ENCODE measurements at regions of chr1 and their contacts with region 1.

Region 1: GRCh38 chr1:37667023-37667761 is 25.1 kb upstream of the CDCA8 start:
- DNase-seq: no peak
- H3K4me3 ChIP-seq: no peak overlapping the region
- H3K27ac ChIP-seq: peak overlapping the region in 1 of 4 donors; percentile 25
- H3K4me1 ChIP-seq: peaks cover 0 to 14% (median 14%) of the 10 kb centered on the region in 4 donors
- H3K27me3 ChIP-seq: peaks cover 0 to 31% (median 16%) of the 10 kb centered on the region in 3 donors
- CTCF ChIP-seq: no peak
- EP300 ChIP-seq: no peak
- POLR2A ChIP-seq: no peak

Region 2: DNA sequence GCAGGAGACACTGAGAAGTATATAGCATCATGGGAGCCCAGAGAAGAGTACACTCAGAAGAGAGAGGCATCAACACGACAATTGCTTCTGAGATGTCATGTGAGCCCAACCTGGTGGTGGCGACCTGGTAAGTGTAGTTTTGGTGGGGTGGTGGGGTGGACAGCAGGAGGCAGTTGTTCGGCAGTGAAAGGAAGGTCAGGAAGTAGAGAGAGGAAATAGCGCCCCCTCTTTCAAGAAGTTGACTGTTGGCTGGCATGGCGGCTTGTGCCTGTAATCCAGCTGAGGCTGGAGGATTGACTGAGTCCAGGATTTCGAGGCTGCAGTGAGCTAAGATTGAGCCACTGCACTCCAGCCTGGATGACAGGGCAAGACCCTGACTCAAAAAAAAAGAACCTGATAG is 45.1 kb before region 1 on chr1:
- intact Hi-C with region 1: loop called (anchors 5 kb)
- DNase-seq: no peak
- H3K4me3 ChIP-seq: no peak overlapping the region
- H3K27ac ChIP-seq: no peak overlapping the region
- H3K4me1 ChIP-seq: no peaks in the 10 kb centered on the region
- H3K27me3 ChIP-seq: peaks cover 0 to 41% (median 0%) of the 10 kb centered on the region in 3 donors
- CTCF ChIP-seq: no peak
- EP300 ChIP-seq: no peak
- POLR2A ChIP-seq: no peak

Measured in sigmoid colon (tissue), 7 donors.